Calu3 (cell line): ENCODE measurements at regions of chr14 and their contacts with region 1.

Region 1: GRCh38 chr14:76947078-76947837 is 81.2 kb downstream of the IRF2BPL start:
- DNase-seq: peak; percentile 93
- H3K4me3 Mint-ChIP-seq: peak overlapping the region; percentile 39
- H3K27ac Mint-ChIP-seq: peak overlapping the region; percentile 95
- H3K4me1 Mint-ChIP-seq: peaks cover 55% of the 10 kb centered on the region
- H3K27me3 Mint-ChIP-seq: no peaks in the 10 kb centered on the region
- CTCF ChIP-seq: peak; percentile 37

Region 2: GRCh38 chr14:76918751-76919543 is 28.3 kb before region 1 on chr14:
- CTCF ChIA-PET with region 1: interaction called, 10 read pairs
- intact Hi-C with region 1: loop called (anchors 2 kb)
- DNase-seq: peak; percentile 92
- H3K4me3 Mint-ChIP-seq: peak overlapping the region; percentile 55
- H3K27ac Mint-ChIP-seq: peak overlapping the region; percentile 84
- H3K4me1 Mint-ChIP-seq: peaks cover 63% of the 10 kb centered on the region
- H3K27me3 Mint-ChIP-seq: no peaks in the 10 kb centered on the region
- CTCF ChIP-seq: no peak

Region 3: GRCh38 chr14:76962303-76962660 is 15.0 kb after region 1 on chr14:
- CTCF ChIA-PET with region 1: interaction called, 15 read pairs
- intact Hi-C with region 1: no loop called
- DNase-seq: no peak
- H3K4me3 Mint-ChIP-seq: peak overlapping the region; percentile 75
- H3K27ac Mint-ChIP-seq: peak overlapping the region; percentile 99
- H3K4me1 Mint-ChIP-seq: peaks cover 59% of the 10 kb centered on the region
- H3K27me3 Mint-ChIP-seq: no peaks in the 10 kb centered on the region
- CTCF ChIP-seq: no peak

Region 4: DNA sequence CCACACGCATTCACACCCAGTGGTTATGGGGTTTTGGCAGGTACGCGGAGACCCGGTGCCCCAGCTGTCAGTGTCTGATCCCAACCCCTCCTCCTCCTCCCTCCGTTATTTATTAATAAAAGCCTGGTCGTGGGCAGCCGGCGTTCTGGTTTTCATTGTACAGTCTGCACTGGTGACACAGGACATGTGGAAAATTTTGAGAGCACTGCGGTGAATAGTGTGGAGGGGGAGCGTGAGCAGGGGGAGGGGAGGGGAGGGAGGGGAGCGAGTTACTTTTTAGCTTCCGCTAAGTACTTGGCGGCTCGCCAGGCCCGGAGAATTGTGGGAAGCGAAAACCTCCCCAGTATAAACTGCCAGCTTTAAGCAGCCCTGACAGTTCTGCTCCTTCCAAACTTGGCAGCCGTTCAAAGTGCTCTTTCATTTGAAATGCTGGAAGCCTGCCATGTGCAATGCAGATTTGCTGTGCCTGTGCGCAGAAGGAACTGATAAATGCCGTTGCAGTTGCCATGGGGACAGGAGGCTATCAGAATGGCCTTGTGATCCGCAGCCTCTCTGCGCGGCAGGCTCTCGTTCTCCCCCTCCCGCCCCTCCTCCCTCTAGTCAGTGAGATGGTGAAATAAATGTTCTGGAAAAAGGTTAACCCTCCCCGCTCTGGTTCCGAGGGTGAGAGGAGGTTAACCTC is 92.9 kb after region 1 on chr14:
- CTCF ChIA-PET with region 1: interaction called, 3 read pairs
- intact Hi-C with region 1: loop called (anchors 5 kb)
- DNase-seq: peak; percentile 97
- H3K4me3 Mint-ChIP-seq: peak overlapping the region; percentile 62
- H3K27ac Mint-ChIP-seq: peak overlapping the region; percentile 98
- H3K4me1 Mint-ChIP-seq: peaks cover 63% of the 10 kb centered on the region
- H3K27me3 Mint-ChIP-seq: no peaks in the 10 kb centered on the region
- CTCF ChIP-seq: no peak

Region 5: DNA sequence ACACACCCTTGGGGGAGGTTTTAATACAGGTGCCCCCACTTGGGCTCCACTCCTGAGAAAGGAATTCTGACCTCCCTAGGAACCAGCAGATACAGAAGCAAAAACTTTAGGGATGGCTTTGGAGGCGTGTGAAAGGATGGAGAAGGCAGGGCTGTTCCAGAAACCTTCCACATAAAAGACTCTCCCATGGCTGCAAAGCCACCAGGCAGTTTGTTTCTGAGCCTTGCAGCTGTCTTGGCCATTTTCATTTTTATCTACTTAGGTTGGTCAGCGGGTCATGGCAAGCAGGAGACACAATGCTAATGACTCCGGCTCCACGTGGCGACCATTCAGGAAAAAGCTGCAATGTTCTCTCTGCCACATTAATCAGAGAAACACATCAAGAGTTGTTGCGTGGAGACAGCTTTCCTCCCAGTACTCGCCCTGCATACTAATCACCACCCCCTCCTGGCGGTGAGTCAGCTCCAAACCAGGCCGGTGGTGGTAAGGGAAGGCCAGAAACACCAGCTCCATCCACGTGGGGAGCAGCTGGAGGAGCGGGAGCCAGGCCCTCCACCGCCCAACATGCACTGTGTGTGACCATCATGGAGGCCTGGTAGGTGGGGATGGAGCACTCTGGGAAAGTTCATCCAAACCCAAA is 112.1 kb after region 1 on chr14:
- CTCF ChIA-PET with region 1: interaction called, 14 read pairs
- intact Hi-C with region 1: no loop called
- DNase-seq: peak; percentile 80
- H3K4me3 Mint-ChIP-seq: no peak overlapping the region
- H3K27ac Mint-ChIP-seq: no peak overlapping the region
- H3K4me1 Mint-ChIP-seq: peaks cover 9% of the 10 kb centered on the region
- H3K27me3 Mint-ChIP-seq: no peaks in the 10 kb centered on the region
- CTCF ChIP-seq: peak; percentile 34